Mucosa of descending colon (tissue), 3 donors: ENCODE measurements at regions of chr10 and their contacts with region 1.

Region 1: GRCh38 chr10:84537447-84537931 is 209.1 kb downstream of the CCSER2 start:
- DNase-seq: peak in 2 of 3 donors; percentile 42 to 65
- ATAC-seq: peak; percentile 91
- H3K4me3 ChIP-seq: no peak overlapping the region
- H3K4me1 ChIP-seq: peaks cover 6% of the 10 kb centered on the region
- CTCF ChIP-seq: peak; percentile 24

Region 2: DNA sequence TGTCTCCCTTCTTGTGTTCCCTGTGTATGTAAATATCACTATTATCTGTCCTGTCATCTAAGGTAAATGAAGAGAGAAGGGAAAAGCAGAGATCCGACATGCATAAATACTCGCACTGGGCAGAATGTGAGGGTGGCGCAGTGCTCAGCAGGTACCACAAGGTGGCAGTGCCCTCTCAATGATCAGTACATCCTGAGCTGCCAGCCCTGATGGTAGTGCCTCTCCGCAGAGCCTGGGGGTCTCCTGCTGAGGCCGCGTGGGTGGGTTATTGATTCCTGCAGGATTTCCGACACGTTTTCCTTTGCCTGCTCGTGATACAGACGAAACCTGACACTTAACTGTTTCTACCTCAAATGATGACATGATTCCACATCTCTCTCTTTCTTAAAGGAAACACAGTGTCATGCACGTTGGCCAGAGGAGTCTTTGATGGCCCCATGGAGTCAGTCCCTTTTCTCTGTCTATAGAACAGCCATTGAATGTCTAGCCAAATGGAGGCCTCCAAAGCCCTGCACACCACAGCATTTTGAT is 272.8 kb before region 1 on chr10:
- intact Hi-C with region 1: loop called (anchors 1 to 5 kb)
- DNase-seq: peak in 2 of 3 donors; percentile 76 to 85
- ATAC-seq: peak; percentile 88
- H3K4me3 ChIP-seq: no peak overlapping the region
- H3K4me1 ChIP-seq: no peaks in the 10 kb centered on the region
- CTCF ChIP-seq: peak; percentile 76

Region 3: GRCh38 chr10:84328418-84329195 is 208.9 kb before region 1 on chr10 and contains the start of gene CCSER2:
- intact Hi-C with region 1: no loop called
- DNase-seq: peak; percentile 98 to 99 (median 99)
- ATAC-seq: peak; percentile 95
- H3K4me3 ChIP-seq: peak within 1 kb of the TSS; percentile 98
- H3K4me1 ChIP-seq: peaks cover 15% of the 10 kb centered on the region
- CTCF ChIP-seq: no peak
- total RNA-seq, gene CCSER2: 30.2 to 118 (median 48.3) TPM

Region 4: DNA sequence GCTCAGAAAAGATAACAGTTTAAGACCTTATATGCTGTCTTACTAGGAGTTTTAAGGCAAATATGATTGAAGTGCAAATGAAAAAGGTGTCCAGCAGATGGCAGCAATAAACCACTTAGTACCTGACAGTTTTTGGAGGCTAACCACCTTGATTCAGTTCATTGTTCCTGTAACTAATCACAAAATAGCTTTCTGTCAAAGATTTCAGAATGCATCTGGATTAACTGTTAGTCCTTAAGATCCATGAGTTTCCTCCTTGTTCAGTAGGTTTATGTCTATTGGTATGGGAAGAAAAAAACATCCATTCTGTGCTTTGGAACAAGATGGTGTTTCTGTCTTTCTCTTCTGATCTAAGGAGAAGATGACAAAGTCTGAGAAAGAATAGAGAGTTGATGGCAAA is 162.5 kb before region 1 on chr10:
- intact Hi-C with region 1: loop called (anchors 5 kb)
- DNase-seq: peak in 1 of 3 donors; percentile 80
- ATAC-seq: peak; percentile 68
- H3K4me3 ChIP-seq: no peak overlapping the region
- H3K4me1 ChIP-seq: no peaks in the 10 kb centered on the region
- CTCF ChIP-seq: peak; percentile 37

Region 5: GRCh38 chr10:84397735-84398144 is 139.7 kb before region 1 on chr10:
- intact Hi-C with region 1: no loop called
- DNase-seq: no peak
- ATAC-seq: no peak
- H3K4me3 ChIP-seq: no peak overlapping the region
- H3K4me1 ChIP-seq: no peaks in the 10 kb centered on the region
- CTCF ChIP-seq: no peak

Region 6: DNA sequence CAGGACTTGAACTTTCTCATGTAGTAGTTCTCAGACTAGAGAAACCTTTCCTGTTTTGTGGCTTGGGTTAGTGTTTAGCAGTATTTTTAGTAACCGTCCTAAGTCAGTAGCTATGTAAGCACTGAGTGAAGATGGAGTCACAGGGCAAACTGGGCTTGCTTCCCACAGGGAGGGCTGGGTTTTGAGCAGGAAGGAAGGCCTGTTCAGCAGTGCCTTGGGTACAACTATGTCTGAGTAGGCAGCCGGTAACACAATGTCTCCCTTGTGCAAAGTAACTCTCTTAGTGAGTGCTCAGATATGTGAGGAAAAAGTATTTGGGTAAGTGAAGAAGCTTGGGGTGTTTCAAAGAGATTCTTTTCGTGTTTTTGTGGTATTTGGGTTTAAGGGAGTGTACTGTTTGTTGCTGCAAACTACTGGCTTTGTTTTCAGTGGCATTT is 112.7 kb before region 1 on chr10:
- intact Hi-C with region 1: no loop called
- DNase-seq: peak; percentile 72 to 82 (median 72)
- ATAC-seq: peak; percentile 100
- H3K4me3 ChIP-seq: no peak overlapping the region
- H3K4me1 ChIP-seq: peaks cover 7% of the 10 kb centered on the region
- CTCF ChIP-seq: no peak

Region 7: DNA sequence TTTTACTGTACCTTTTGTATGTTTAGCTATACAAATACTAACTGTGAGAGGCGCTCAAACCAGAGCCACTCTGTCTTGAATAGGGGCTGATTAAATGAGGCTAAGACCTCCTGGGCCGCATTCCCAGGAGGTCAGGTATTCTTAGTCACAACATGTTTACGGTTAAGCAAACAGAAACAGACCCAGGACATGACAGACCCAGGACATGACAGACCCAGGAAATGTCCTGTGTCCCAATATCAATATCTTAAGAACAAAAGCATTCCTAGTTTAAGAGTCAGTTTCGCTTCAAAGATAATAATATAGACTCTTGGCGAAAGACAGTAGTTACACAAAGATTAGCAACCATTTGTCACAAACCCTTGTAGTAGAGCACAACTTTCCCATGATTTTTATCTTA is 95.4 kb after region 1 on chr10:
- intact Hi-C with region 1: no loop called
- DNase-seq: no peak
- ATAC-seq: no peak
- H3K4me3 ChIP-seq: no peak overlapping the region
- H3K4me1 ChIP-seq: no peaks in the 10 kb centered on the region
- CTCF ChIP-seq: no peak

Region 8: DNA sequence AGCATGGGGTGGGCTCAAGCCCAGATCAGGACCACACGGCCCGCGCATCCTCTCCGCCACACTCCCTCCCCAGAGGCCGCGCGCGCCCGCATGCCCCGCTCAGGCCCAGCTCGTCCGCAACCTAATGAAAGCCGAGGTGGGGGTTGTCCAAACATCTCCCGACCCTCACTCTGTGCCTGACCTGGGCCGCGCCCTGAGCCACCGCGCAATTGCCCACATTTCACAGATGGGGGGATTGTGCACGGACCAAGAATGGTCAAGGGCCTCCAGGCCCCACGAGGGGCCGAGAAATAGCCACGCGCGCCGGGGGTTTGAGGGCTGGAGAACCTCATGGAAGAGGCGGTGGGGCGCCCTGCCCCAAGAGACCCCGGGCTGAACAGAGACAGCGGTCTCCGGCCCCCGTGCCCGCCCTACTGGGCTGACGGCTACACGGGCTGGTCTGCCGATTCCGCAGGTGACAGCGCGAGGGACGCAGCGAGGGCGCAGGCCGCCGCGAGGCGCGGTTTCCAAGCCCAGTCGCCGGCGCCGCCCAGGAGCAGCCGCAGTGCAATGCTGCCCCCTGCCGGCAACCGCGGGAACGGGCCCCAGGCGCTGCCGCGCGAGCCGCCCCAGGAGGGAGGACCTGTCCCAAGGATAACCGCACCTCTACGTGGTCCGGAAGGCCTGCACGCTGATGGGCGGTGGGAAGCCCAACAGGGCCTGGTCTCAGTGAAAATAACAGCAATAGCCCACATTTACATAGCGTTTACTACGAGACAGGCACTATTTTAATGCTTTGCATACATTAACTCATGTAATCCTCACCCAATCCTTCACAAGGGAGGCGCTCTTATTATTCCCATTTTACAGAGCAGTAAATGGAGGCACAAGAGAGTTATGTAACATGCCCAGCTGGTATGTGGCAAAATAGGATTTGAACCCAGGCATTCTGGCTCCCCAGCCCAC is 1839.6 kb after region 1 on chr10:
- intact Hi-C with region 1: loop called (anchors 10 kb)
- DNase-seq: peak; percentile 78 to 91 (median 84)
- ATAC-seq: peak; percentile 98
- H3K4me3 ChIP-seq: no peak overlapping the region
- H3K4me1 ChIP-seq: peaks cover 6% of the 10 kb centered on the region
- CTCF ChIP-seq: peak; percentile 99